WTC11 (cell line): ENCODE measurements at regions of chr2 and their contacts with region 1.

Region 1: DNA sequence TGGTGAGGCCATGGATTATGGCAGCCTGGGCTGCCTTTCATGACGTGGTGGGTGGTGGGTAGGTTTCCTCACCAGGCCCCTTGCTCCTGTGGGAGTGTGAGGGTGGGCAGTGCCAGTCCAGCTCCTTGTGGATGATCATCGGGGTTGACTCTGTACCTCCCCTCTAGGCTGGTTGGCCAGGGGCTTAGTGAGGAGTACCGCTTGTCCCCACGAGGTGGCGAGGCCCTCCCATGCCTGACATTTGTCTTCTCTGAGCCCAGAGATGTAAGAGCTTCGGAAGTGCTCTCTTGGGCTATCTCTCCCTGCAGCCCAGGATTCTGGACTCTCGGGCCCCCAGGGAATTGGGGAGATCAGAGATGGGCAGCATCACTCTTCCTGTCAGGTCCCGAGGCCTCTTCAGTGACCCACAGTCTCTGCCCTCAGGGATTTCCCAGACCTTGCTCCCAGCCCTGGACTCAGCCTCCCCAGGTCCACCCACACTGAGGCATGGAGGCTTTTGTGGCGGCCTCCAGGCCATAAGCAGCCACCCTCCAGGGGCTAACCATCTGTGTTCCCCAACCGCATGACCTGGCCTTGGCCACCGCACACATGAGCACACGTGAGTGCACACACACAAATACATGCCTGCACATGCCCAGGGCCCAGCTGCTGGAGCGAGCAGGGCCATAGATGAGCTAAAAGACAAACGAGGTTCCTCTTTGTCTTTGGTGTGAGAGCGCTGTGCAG is 6.5 kb downstream of the SPR start:
- DNase-seq: peak; percentile 83
- ATAC-seq: peak; percentile 83
- H3K4me3 Mint-ChIP-seq: no peak overlapping the region
- H3K27ac Mint-ChIP-seq: no peak overlapping the region
- H3K4me1 Mint-ChIP-seq: peaks cover 33% of the 10 kb centered on the region
- H3K27me3 Mint-ChIP-seq: peaks cover 60% of the 10 kb centered on the region
- CTCF ChIP-seq: peak; percentile 58

Region 2: GRCh38 chr2:72946466-72946865 is 52.7 kb after region 1 on chr2:
- CTCF ChIA-PET with region 1: interaction called, 218 read pairs
- POLR2A ChIA-PET with region 1: no interaction called
- DNase-seq: no peak
- ATAC-seq: no peak
- H3K4me3 Mint-ChIP-seq: no peak overlapping the region
- H3K27ac Mint-ChIP-seq: no peak overlapping the region
- H3K4me1 Mint-ChIP-seq: peaks cover 38% of the 10 kb centered on the region
- H3K27me3 Mint-ChIP-seq: peaks cover 7% of the 10 kb centered on the region
- CTCF ChIP-seq: no peak

Region 3: GRCh38 chr2:73063909-73064875 is 170.4 kb after region 1 on chr2:
- CTCF ChIA-PET with region 1: interaction called, 13 read pairs
- POLR2A ChIA-PET with region 1: no interaction called
- DNase-seq: peak; percentile 35
- ATAC-seq: peak; percentile 76
- H3K4me3 Mint-ChIP-seq: 0 out of 2 replicates have a peak overlapping the region, but pooled peaks have one; percentile 13
- H3K27ac Mint-ChIP-seq: peak overlapping the region; percentile 90
- H3K4me1 Mint-ChIP-seq: peaks cover 34% of the 10 kb centered on the region
- H3K27me3 Mint-ChIP-seq: no peaks in the 10 kb centered on the region
- CTCF ChIP-seq: no peak